CD4-positive, alpha-beta T cell (primary cell): ENCODE measurements at regions of chr6 and their contacts with region 1.

Region 1: GRCh38 chr6:147194652-147195411 is 9.4 kb upstream of the STXBP5 start:
- DNase-seq: no peak
- ATAC-seq: peak; percentile 26
- H3K4me3 ChIP-seq: no peak overlapping the region
- H3K4me3 Mint-ChIP-seq: no peak overlapping the region
- H3K27ac ChIP-seq: no peak overlapping the region
- H3K27ac Mint-ChIP-seq: no peak overlapping the region
- H3K4me1 ChIP-seq: no peaks in the 10 kb centered on the region
- H3K4me1 Mint-ChIP-seq: peaks cover 7% of the 10 kb centered on the region
- H3K27me3 ChIP-seq: no peaks in the 10 kb centered on the region
- H3K27me3 Mint-ChIP-seq: no peaks in the 10 kb centered on the region
- CTCF ChIP-seq: no peak

Region 2: GRCh38 chr6:147099974-147100373 is 94.9 kb before region 1 on chr6:
- CTCF ChIA-PET with region 1: no interaction called
- POLR2A ChIA-PET with region 1: no interaction called
- intact Hi-C with region 1: loop called in 1 of 2 experiments (anchors 5 kb)
- DNase-seq: no peak
- ATAC-seq: no peak
- H3K4me3 ChIP-seq: no peak overlapping the region
- H3K4me3 Mint-ChIP-seq: no peak overlapping the region
- H3K27ac ChIP-seq: no peak overlapping the region
- H3K27ac Mint-ChIP-seq: no peak overlapping the region
- H3K4me1 ChIP-seq: peaks cover 5% of the 10 kb centered on the region
- H3K4me1 Mint-ChIP-seq: peaks cover 19% of the 10 kb centered on the region
- H3K27me3 ChIP-seq: no peaks in the 10 kb centered on the region
- H3K27me3 Mint-ChIP-seq: no peaks in the 10 kb centered on the region
- CTCF ChIP-seq: no peak

Region 3: DNA sequence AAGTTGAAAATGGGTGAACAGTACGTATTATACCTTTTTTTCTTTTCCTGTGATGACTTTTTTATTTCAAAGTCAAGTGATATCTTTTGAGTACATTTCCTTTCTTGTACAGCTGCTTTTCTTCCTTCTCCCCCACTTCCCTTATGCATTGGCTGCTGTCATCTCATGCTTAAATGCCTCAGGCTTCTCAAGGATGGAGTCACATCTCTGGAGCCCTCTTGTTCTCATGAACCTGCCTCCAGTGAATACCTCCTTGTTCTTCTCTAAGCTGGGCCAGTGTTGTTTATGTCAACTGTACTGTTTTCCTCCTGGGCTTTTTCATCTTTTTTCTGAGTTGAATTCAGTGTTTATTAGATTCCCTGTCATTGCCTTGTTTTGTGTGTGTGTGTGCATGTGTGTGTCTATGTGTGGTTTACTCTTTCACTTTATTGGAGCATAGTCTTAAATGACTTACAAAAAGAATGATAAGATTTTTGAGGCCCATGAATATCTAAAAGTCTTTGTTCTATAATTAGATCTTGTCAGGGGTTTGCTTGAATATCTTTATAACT is 33.0 kb after region 1 on chr6:
- CTCF ChIA-PET with region 1: no interaction called
- POLR2A ChIA-PET with region 1: no interaction called
- intact Hi-C with region 1: loop called in 1 of 2 experiments (anchors 5 kb)
- DNase-seq: no peak
- ATAC-seq: no peak
- H3K4me3 ChIP-seq: no peak overlapping the region
- H3K4me3 Mint-ChIP-seq: no peak overlapping the region
- H3K27ac ChIP-seq: no peak overlapping the region
- H3K27ac Mint-ChIP-seq: no peak overlapping the region
- H3K4me1 ChIP-seq: no peaks in the 10 kb centered on the region
- H3K4me1 Mint-ChIP-seq: peaks cover 45% of the 10 kb centered on the region
- H3K27me3 ChIP-seq: no peaks in the 10 kb centered on the region
- H3K27me3 Mint-ChIP-seq: no peaks in the 10 kb centered on the region
- CTCF ChIP-seq: no peak